ENCODE measurements at regions of chr20 and their contacts with region 1.

Region 1: DNA sequence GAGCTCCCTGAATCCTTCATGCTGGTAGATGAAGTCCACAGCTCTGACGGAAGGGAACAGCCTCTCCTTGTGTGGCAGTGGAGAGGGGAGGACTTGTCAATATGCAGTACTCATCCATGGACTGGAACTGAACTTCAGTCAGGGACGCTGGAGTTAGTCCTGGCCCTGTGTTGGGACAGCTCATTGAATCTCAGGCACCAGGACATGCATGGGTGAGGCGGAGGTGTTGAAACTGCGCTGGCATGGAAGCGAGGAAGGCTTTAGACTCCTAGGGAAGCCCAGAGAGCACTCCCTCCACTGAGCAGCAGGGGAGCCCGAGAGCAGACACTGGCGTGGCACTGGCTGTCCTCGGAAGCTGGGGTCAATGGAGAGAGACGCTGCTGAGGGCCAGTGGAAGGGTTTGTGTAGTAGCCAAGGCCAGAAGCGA is 161.3 kb upstream of the GGTLC1 start:
- DNase-seq: peak; percentile 12 to 48
- ATAC-seq: peak; percentile 50 to 92 (median 72)
- H3K4me3 ChIP-seq: no peak overlapping the region
- H3K27ac ChIP-seq: no peak overlapping the region
- H3K4me1 ChIP-seq: peaks cover 0 to 7% (median 0%) of the 10 kb centered on the region in 9 donors
- H3K27me3 ChIP-seq: no peaks in the 10 kb centered on the region
- CTCF ChIP-seq: peak in 8 of 9 donors; percentile 19 to 53 (median 48)

Region 2: GRCh38 chr20:24469116-24469893 is 319.4 kb after region 1 on chr20 and contains the start of gene SYNDIG1:
- intact Hi-C with region 1: loop called in 1 of 10 experiments (anchors 10 kb)
- DNase-seq: peak; percentile 24 to 54
- ATAC-seq: peak; percentile 37 to 77 (median 51)
- H3K4me3 ChIP-seq: peak within 1 kb of the TSS; percentile 38 to 65 (median 58)
- H3K27ac ChIP-seq: peak within 1 kb of the TSS; percentile 20 to 92 (median 77)
- H3K4me1 ChIP-seq: peaks cover 0 to 41% (median 9%) of the 10 kb centered on the region in 9 donors
- H3K27me3 ChIP-seq: peaks cover 0 to 63% (median 45%) of the 10 kb centered on the region in 7 donors
- CTCF ChIP-seq: no peak
- total RNA-seq, gene SYNDIG1: 8.7 to 34.7 (median 22.6) TPM